GM12878 (cell line): ENCODE measurements at regions of chr6 and their contacts with region 1.

Region 1: GRCh38 chr6:15955944-15956735 is 172.7 kb upstream of the MYLIP start:
- DNase-seq: no peak
- ATAC-seq: no peak
- H3K4me3 ChIP-seq: no peak overlapping the region
- H3K27ac ChIP-seq: no peak overlapping the region
- H3K4me1 ChIP-seq: peaks cover 28% of the 10 kb centered on the region
- H3K27me3 ChIP-seq: no peaks in the 10 kb centered on the region
- CTCF ChIP-seq: no peak
- EP300 ChIP-seq: no peak
- POLR2A ChIP-seq: no peak
- RAD21 ChIP-seq: no peak

Region 2: DNA sequence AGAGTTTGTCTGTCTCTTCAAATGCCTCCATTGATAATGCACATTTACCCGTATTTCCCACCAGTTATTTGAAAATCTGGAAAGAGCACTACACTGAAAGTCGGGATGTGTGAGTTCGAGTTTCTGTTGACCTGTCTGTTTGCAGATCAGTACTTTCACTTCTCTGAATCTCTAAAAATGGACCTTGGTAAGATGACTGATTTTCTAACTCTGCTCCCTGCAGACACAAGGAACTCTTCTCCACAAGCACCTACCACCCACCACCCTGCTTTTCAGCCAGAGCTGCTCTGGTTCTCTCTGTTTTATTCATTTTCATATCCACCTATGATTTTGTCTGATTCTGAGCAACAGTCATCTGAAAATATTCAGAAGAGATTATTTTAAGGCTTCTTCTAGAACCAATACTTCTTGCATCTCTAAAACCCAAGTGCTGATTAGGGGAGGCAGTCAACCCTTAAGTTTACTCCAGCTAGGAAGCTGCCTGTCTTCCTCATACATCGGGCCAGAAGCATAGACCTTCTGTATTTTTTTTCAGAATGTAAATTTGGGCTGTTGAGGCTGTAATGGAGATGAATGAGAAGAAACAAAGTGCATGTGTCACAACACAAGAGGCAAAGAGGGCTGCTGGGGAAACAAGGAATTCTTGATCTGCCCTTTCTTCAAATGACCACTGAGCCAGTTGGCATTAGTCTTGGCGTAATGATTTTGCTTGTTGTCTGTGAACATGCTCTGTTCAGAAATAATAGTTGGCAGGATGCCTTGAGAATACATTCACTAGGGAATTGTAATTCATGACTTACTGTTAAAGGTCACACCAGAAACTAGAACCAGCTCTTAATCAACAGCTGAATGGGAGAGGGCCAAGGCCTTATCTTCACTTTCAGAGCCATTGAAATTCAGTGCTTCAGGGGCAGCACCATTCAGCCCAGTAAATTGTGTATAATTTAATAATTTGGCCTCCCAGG is 87.3 kb after region 1 on chr6:
- CTCF ChIA-PET with region 1: no interaction called
- POLR2A ChIA-PET with region 1: interaction called, 3 read pairs
- RAD21 ChIA-PET with region 1: interaction called, 5 read pairs
- SMC1A ChIA-PET with region 1: interaction called, 6 read pairs
- in situ Hi-C with region 1: no loop called
- intact Hi-C with region 1: loop called (anchors 5 kb)
- DNase-seq: peak; percentile 62
- ATAC-seq: peak; percentile 91
- H3K4me3 ChIP-seq: no peak overlapping the region
- H3K27ac ChIP-seq: peak overlapping the region; percentile 59
- H3K4me1 ChIP-seq: peaks cover 29% of the 10 kb centered on the region
- H3K27me3 ChIP-seq: no peaks in the 10 kb centered on the region
- CTCF ChIP-seq: no peak
- EP300 ChIP-seq: peak; percentile 27 to 58; a peak in 2 of 4 replicates
- POLR2A ChIP-seq: no peak
- RAD21 ChIP-seq: no peak